Dorsolateral prefrontal cortex (tissue), 120 donors: ENCODE measurements at regions of chr17 and their contacts with region 1.

Region 1: DNA sequence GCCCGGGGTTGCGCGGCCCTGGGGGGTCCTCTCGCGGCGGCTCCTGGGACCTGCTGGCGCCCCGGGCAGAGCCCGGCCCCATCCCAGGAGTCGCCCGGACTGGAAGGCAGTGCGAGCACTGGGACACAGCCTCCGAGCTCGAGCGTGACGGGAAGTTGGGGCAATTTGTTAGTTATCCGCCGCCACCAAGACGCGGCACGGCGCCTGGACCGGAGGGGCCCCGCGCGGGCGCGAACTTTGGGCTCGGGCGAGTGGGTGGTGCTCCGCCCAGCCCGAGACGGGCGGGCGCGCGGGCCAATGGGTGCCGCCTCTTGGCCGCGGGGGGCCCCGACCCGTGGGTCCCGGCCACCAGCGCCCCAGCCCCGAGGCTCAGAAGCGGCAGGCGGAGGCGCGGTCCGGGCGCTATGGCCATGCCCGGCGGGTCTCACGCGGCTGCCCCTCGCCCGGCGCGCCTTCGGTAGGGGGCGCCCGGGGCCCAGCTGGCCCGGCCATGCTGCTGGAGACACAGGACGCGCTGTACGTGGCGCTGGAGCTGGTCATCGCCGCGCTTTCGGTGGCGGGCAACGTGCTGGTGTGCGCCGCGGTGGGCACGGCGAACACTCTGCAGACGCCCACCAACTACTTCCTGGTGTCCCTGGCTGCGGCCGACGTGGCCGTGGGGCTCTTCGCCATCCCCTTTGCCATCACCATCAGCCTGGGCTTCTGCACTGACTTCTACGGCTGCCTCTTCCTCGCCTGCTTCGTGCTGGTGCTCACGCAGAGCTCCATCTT is at the start of gene ADORA2B:
- DNase-seq: peak in 5 of 10 donors; percentile 15 to 70 (median 37)
- H3K4me3 ChIP-seq: peak within 1 kb of the TSS; percentile 23 to 81 (median 62)
- H3K27ac ChIP-seq: peak within 1 kb of the TSS in 31 of 59 donors; percentile 7 to 77 (median 51)
- H3K27me3 ChIP-seq: peaks cover 0 to 33% (median 13%) of the 10 kb centered on the region in 45 donors
- CTCF ChIP-seq: peak in 53 of 56 donors; percentile 7 to 71 (median 49)
- total RNA-seq, gene ADORA2B: 2.6 to 22.2 (median 7.2) TPM

Region 2: DNA sequence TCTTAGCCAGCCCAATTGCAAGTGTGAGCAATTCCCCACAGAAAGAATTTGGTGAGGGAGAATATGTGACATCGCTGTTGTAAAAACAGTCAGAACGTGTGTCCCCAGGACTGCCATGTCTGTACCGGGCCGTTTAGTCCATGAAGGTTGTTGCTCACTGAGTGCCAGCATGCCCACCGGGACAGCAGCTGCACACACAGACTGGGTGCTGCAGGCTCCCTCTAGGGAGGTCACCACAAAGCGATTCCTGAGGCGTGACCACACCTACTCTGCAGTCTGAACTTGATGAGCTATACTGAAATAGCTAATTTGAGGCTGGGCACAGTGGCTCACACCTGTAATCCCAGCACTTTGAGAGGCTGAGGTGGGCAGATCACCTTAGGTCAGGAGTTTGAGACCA is 44.1 kb before region 1 on chr17:
- intact Hi-C with region 1: no loop called
- DNase-seq: no peak
- H3K4me3 ChIP-seq: no peak overlapping the region
- H3K27ac ChIP-seq: no peak overlapping the region
- H3K27me3 ChIP-seq: no peaks in the 10 kb centered on the region
- CTCF ChIP-seq: no peak

Region 3: GRCh38 chr17:15999439-16000350 is 54.8 kb after region 1 on chr17 and contains the starts of genes TTC19 and ZSWIM7:
- intact Hi-C with region 1: loop called in 1 of 2 experiments (anchors 2 kb)
- DNase-seq: peak; percentile 97 to 99 (median 98)
- H3K4me3 ChIP-seq: peak within 1 kb of the TSS; percentile 58 to 98 (median 86)
- H3K27ac ChIP-seq: peak within 1 kb of the TSS; percentile 72 to 99 (median 97)
- H3K27me3 ChIP-seq: no peaks in the 10 kb centered on the region
- CTCF ChIP-seq: peak in 38 of 56 donors; percentile 4 to 56 (median 33)
- total RNA-seq, gene TTC19: 45.3 to 87.4 (median 67.2) TPM
- total RNA-seq, gene ZSWIM7: 12.9 to 53.0 (median 25.6) TPM